Tibial artery (tissue), 4 donors: ENCODE measurements at regions of chr4 and their contacts with region 1.

Region 1: GRCh38 chr4:40939856-40940255 is 190.1 kb downstream of the NSUN7 start:
- DNase-seq: no peak
- H3K4me3 ChIP-seq: no peak overlapping the region
- H3K27ac ChIP-seq: peak overlapping the region; percentile 64 to 68
- H3K4me1 ChIP-seq: peaks cover 0 to 69% (median 48%) of the 10 kb centered on the region in 4 donors
- H3K27me3 ChIP-seq: no peaks in the 10 kb centered on the region
- CTCF ChIP-seq: no peak

Region 2: GRCh38 chr4:40971338-40971737 is 31.5 kb after region 1 on chr4:
- intact Hi-C with region 1: loop called (anchors 5 kb)
- DNase-seq: no peak
- H3K4me3 ChIP-seq: no peak overlapping the region
- H3K27ac ChIP-seq: no peak overlapping the region
- H3K4me1 ChIP-seq: peaks cover 0 to 21% (median 16%) of the 10 kb centered on the region in 4 donors
- H3K27me3 ChIP-seq: no peaks in the 10 kb centered on the region
- CTCF ChIP-seq: no peak